CD4-positive, alpha-beta T cell (primary cell): ENCODE measurements at regions of chr6 and their contacts with region 1.

Region 1: GRCh38 chr6:35048631-35049083 is 92.5 kb downstream of the TCP11 start:
- DNase-seq: peak in 13 of 14 experiments; percentile 3 to 54 (median 18)
- ATAC-seq: peak; percentile 86
- H3K4me3 ChIP-seq: peak overlapping the region; percentile 44
- H3K4me3 Mint-ChIP-seq: no peak overlapping the region
- H3K27ac ChIP-seq: no peak overlapping the region
- H3K27ac Mint-ChIP-seq: no peak overlapping the region
- H3K4me1 ChIP-seq: peaks cover 14% of the 10 kb centered on the region
- H3K4me1 Mint-ChIP-seq: no peaks in the 10 kb centered on the region
- H3K27me3 ChIP-seq: no peaks in the 10 kb centered on the region
- H3K27me3 Mint-ChIP-seq: no peaks in the 10 kb centered on the region
- CTCF ChIP-seq: peak; percentile 26

Region 2: DNA sequence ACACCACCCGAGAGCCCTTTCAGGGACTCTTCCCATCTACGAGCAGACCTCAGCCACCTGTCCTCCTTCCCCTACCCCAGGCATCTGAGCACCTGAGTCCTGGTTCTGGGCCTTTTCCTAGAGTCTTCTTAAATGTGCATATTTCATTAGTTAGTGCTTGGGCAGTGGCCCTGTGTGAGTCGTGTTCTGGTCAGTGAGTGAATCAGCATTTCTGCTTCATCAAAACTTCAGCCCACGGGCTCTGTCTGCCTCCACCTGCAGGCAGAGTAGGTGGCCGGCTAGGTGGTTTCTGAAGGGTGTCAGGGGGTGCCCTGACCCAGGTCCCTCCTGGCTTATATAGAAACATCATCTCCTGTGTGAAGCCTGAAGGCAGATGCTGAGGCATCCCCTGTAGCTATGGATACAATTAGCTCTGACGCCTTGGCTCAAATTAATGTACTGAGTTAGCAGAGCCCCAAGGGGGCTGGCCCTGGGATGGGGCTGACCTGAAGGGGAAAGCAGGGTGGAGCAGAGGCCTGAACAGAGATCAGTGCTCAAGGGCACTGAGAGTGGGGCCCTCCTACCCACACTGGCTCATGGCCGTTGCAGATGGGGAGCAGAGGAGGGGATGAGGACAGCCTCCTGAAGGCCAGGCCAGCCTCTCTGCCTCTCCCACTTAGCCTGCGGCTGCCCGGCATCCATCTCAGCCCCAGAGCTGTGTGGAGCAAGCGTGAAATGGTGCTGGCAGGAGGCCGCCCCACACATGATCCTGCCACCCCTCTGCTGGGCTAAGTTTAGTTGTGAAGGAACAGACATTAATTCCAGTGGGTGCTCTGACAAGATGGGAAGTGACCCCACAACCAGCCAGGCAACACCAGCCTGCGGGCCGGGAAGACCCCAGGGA is 1315.6 kb before region 1 on chr6:
- CTCF ChIA-PET with region 1: no interaction called
- POLR2A ChIA-PET with region 1: no interaction called
- intact Hi-C with region 1: loop called in 1 of 2 experiments (anchors 10 kb)
- DNase-seq: no peak
- ATAC-seq: no peak
- H3K4me3 ChIP-seq: no peak overlapping the region
- H3K4me3 Mint-ChIP-seq: no peak overlapping the region
- H3K27ac ChIP-seq: no peak overlapping the region
- H3K27ac Mint-ChIP-seq: no peak overlapping the region
- H3K4me1 ChIP-seq: no peaks in the 10 kb centered on the region
- H3K4me1 Mint-ChIP-seq: no peaks in the 10 kb centered on the region
- H3K27me3 ChIP-seq: no peaks in the 10 kb centered on the region
- H3K27me3 Mint-ChIP-seq: no peaks in the 10 kb centered on the region
- CTCF ChIP-seq: no peak

Region 3: GRCh38 chr6:34284563-34285447 is 763.9 kb before region 1 on chr6:
- CTCF ChIA-PET with region 1: no interaction called
- POLR2A ChIA-PET with region 1: no interaction called
- intact Hi-C with region 1: no loop called
- DNase-seq: peak in 3 of 14 experiments; percentile 16 to 49 (median 34)
- ATAC-seq: no peak
- H3K4me3 ChIP-seq: no peak overlapping the region
- H3K4me3 Mint-ChIP-seq: no peak overlapping the region
- H3K27ac ChIP-seq: no peak overlapping the region
- H3K27ac Mint-ChIP-seq: peak overlapping the region; percentile 34
- H3K4me1 ChIP-seq: peaks cover 6% of the 10 kb centered on the region
- H3K4me1 Mint-ChIP-seq: peaks cover 21% of the 10 kb centered on the region
- H3K27me3 ChIP-seq: no peaks in the 10 kb centered on the region
- H3K27me3 Mint-ChIP-seq: no peaks in the 10 kb centered on the region
- CTCF ChIP-seq: no peak

Region 4: DNA sequence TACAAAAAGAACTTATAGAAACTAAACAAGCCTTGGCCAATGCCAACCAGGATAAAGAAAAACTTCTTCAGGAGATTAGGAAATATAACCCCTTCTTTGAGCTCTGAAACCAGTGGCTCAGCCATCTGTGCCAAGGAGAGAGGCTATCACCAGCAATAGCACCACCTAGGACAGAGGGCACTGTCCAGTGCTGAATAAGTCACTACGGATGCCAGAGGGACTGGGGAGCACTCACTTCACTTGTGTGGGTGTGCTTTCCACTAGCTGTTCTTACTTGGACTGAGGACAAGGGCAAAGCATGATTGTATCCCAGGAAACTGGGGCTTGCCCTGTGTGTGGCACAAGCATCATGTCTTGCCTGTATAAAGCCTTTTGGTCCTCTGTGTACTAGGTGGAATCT is 176.3 kb before region 1 on chr6:
- CTCF ChIA-PET with region 1: no interaction called
- POLR2A ChIA-PET with region 1: no interaction called
- intact Hi-C with region 1: loop called in 1 of 2 experiments (anchors 10 kb)
- DNase-seq: no peak
- ATAC-seq: no peak
- H3K4me3 ChIP-seq: no peak overlapping the region
- H3K4me3 Mint-ChIP-seq: no peak overlapping the region
- H3K27ac ChIP-seq: no peak overlapping the region
- H3K27ac Mint-ChIP-seq: no peak overlapping the region
- H3K4me1 ChIP-seq: no peaks in the 10 kb centered on the region
- H3K4me1 Mint-ChIP-seq: no peaks in the 10 kb centered on the region
- H3K27me3 ChIP-seq: no peaks in the 10 kb centered on the region
- H3K27me3 Mint-ChIP-seq: no peaks in the 10 kb centered on the region
- CTCF ChIP-seq: no peak